Left cardiac atrium (tissue), 4 donors: ENCODE measurements at regions of chr11 and their contacts with region 1.

Region 1: DNA sequence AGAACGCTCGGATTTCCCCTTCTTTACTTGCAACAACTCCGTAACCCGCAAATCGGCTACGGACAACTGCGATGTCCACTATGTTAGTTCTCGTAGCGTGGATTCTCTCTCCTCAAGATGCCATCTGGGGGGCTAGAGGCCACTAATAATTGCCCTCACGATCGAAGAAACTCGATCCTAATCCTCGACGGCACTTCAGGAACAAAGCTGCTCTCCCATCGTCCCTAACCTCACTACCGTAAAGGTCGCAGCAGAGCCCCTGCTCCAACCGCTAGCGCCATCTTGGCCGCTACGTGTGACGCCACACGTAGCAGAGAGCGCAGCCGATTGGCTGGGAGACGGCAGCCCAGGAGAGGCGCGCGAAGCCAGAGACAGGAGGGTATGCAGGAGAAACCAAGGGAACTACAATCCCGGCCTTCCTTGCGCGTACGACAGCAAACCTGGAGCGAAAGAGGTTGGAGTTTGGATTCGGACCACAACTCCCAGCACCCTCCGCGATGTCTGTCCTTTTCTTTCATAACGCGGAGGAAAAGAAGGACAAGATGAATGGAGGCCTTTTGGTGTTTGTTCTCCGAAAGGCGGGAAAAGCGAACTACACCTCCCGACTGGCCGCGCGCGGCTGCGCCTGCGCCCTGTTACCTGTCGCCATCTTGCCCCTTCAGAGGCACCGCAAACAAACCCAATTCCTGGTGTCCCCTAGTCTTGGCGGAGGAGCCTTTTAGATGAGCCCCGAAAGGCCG is at the start of gene EMSY:
- DNase-seq: peak; percentile 97
- ATAC-seq: peak; percentile 97
- total RNA-seq, gene EMSY: 17.8 to 19.7 TPM

Region 2: DNA sequence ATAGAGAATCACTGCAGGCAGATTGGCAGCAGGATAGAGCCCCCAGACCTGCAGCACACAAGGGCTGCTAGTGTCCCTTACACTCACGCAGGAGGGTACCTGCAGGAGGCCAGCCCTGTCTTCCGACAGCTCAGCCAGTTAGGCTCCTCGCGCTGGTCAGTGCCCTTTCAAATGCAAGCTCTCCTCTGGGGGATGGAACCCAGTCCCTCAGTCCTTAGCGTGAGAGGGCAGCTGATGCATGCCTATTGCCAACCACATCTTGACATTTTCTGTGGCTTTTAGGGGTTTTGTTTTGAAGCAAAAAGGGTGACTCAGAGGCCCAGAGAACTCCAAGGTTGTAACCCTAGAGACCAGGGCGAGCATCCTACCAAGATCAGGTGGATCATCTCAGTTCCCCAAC is 278.2 kb before region 1 on chr11:
- intact Hi-C with region 1: no loop called
- DNase-seq: no peak
- ATAC-seq: no peak

Region 3: DNA sequence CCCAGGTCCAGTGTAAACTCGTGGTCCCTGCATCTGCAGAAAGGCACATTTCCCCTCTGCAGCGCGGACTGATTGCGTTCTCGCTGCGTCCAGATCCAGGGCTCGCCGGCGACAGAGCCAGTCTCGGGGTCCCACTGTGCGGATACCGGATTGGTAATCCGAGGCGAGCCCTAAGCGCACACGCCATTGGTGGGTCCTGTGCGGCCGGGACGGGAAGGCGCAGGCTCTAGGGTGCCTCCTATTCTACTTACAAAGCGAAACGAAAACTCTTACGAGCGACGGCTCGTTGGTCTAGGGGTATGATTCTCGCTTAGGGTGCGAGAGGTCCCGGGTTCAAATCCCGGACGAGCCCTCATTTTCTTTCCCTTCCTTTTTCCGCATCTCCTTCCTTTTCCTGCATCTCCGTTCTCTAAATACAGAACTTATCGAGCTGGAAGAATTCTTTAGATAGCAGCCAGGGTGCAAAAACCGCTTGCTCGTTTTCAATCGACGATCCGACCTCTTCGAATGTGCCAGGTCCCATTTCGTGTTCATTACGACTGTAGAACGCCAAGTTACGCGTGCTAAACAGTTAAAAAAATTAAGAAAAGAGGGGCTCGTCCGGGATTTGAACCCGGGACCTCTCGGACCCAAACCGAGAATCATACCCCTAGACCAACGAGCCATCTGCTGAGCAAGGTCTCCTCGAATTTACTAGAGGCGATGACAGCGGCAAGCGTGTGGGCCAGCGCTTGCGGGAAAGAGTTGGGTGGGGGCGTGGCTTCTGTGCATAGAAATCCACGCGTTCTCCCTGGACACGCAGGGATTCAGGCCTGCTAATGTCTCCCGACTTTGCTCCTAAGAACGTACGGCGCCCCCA is 209.1 kb before region 1 on chr11:
- intact Hi-C with region 1: loop called in 1 of 2 experiments (anchors 10 kb)
- DNase-seq: peak; percentile 91
- ATAC-seq: peak; percentile 90 to 91

Region 4: GRCh38 chr11:76270387-76270786 is 174.2 kb before region 1 on chr11:
- intact Hi-C with region 1: no loop called
- DNase-seq: no peak
- ATAC-seq: peak; percentile 12 to 67

Region 5: DNA sequence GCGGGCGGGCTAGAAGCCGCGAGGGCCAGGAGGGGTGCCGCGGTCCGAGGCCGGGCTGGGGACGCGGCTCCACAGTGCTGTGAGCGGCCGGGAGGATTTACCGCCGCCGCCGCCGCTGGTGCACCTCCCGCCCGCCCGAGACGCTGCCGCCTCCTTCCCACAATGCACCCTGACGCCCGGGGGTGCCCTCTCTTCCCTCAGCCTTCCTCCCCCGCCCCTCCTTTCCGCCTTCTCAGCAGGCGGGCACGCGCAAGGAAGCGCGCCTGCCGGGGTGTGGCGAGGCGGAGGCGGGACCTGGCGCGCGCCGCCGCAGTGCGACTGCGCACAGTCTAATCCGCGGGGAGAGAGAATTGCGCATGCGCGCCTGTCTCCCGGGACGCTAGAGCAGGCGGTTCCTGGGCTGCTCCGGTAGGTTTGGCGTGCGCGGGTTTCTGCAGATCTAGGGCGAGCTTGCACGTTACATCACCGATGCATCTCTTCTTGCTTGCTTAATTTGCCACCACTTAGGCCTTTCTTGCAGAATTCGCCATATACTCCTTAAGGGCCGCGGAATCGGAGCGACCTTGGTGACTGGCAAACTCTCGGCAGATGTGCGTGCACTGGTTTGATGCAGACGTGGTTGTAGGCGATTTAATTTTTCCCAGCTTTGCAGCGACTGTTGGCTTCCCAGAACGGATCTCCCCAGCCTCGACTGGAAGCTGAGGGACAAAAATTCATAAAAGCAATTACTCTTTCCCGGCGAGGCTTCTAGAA is 63.4 kb before region 1 on chr11 and contains the starts of genes GVQW3 and THAP12:
- intact Hi-C with region 1: loop called in 1 of 2 experiments (anchors 5 kb)
- DNase-seq: peak; percentile 98
- ATAC-seq: peak; percentile 98 to 99
- total RNA-seq, gene GVQW3: 0.99 to 2.1 TPM
- total RNA-seq, gene THAP12: 16.5 to 25.2 TPM